Endothelial cell of umbilical vein (primary cell): ENCODE measurements at regions of chr3 and their contacts with region 1.

Region 1: GRCh38 chr3:16884084-16884747 is 539 bp upstream of the PLCL2 start:
- DNase-seq: peak; percentile 55
- H3K4me3 ChIP-seq: peak overlapping the region; percentile 93 to 97 (median 95)
- H3K27ac ChIP-seq: peak overlapping the region; percentile 50
- H3K4me1 ChIP-seq: peaks cover 16% of the 10 kb centered on the region
- H3K27me3 ChIP-seq: no peaks in the 10 kb centered on the region
- CTCF ChIP-seq: peak; percentile 66 to 86
- POLR2A ChIP-seq: no peak

Region 2: GRCh38 chr3:16842272-16843270 is 41.6 kb before region 1 on chr3:
- CTCF ChIA-PET with region 1: interaction called, 20 read pairs
- POLR2A ChIA-PET with region 1: no interaction called
- dilution Hi-C with region 1: no loop called
- intact Hi-C with region 1: loop called (anchors 2 kb)
- DNase-seq: no peak
- H3K4me3 ChIP-seq: no peak overlapping the region
- H3K27ac ChIP-seq: no peak overlapping the region
- H3K4me1 ChIP-seq: peaks cover 23% of the 10 kb centered on the region
- H3K27me3 ChIP-seq: no peaks in the 10 kb centered on the region
- CTCF ChIP-seq: no peak
- POLR2A ChIP-seq: no peak

Region 3: GRCh38 chr3:16864610-16865313 is 19.5 kb before region 1 on chr3:
- CTCF ChIA-PET with region 1: interaction called, 7 read pairs
- POLR2A ChIA-PET with region 1: no interaction called
- dilution Hi-C with region 1: no loop called
- intact Hi-C with region 1: loop called (anchors 1 kb)
- DNase-seq: peak; percentile 88
- H3K4me3 ChIP-seq: peak overlapping the region in 2 of 3 experiments; percentile 6 to 41
- H3K27ac ChIP-seq: peak overlapping the region; percentile 75
- H3K4me1 ChIP-seq: peaks cover 23% of the 10 kb centered on the region
- H3K27me3 ChIP-seq: no peaks in the 10 kb centered on the region
- CTCF ChIP-seq: no peak
- POLR2A ChIP-seq: no peak

Region 4: GRCh38 chr3:16906682-16907081 is 22.5 kb after region 1 on chr3:
- CTCF ChIA-PET with region 1: interaction called, 33 read pairs
- POLR2A ChIA-PET with region 1: no interaction called
- dilution Hi-C with region 1: no loop called
- intact Hi-C with region 1: loop called (anchors 1 kb)
- DNase-seq: peak; percentile 65
- H3K4me3 ChIP-seq: no peak overlapping the region
- H3K27ac ChIP-seq: peak overlapping the region; percentile 78
- H3K4me1 ChIP-seq: peaks cover 34% of the 10 kb centered on the region
- H3K27me3 ChIP-seq: no peaks in the 10 kb centered on the region
- CTCF ChIP-seq: no peak
- POLR2A ChIP-seq: no peak

Region 5: DNA sequence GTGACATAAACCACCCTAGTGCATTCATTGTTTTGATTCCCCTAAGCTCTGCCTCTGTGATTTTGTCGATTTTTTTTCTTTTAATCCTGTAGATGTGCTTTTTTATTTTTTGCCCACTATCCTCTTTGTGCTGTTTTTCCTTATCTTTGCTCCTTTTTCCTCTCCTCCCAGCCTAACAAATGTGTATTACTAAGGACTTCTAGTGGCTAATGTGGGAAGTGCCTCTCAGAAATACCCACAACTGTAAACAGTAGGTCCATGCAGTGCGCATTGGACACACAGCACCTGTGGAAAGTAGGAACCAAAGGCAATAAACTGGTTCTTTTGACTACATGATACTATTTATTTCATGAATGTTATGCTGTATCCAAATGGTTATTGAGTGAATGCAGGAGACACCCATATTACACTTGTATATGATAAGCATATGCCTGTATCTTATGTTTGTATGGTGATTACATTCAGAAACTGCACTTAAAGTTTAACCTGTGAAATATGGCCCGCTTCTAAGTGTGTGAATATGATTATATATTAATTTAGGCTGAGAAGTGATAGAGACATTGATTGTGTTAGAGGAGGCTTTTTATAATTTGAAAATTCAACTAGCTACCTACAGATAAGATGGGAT is 148.3 kb after region 1 on chr3:
- CTCF ChIA-PET with region 1: interaction called, 8 read pairs
- POLR2A ChIA-PET with region 1: no interaction called
- dilution Hi-C with region 1: no loop called
- intact Hi-C with region 1: loop called (anchors 2 kb)
- DNase-seq: peak; percentile 58
- H3K4me3 ChIP-seq: no peak overlapping the region
- H3K27ac ChIP-seq: no peak overlapping the region
- H3K4me1 ChIP-seq: no peaks in the 10 kb centered on the region
- H3K27me3 ChIP-seq: no peaks in the 10 kb centered on the region
- CTCF ChIP-seq: peak; percentile 35 to 55
- POLR2A ChIP-seq: no peak

Region 6: GRCh38 chr3:17077606-17078005 is 193.4 kb after region 1 on chr3:
- CTCF ChIA-PET with region 1: no interaction called
- POLR2A ChIA-PET with region 1: no interaction called
- dilution Hi-C with region 1: no loop called
- intact Hi-C with region 1: no loop called
- DNase-seq: no peak
- H3K4me3 ChIP-seq: no peak overlapping the region
- H3K27ac ChIP-seq: no peak overlapping the region
- H3K4me1 ChIP-seq: no peaks in the 10 kb centered on the region
- H3K27me3 ChIP-seq: no peaks in the 10 kb centered on the region
- CTCF ChIP-seq: no peak
- POLR2A ChIP-seq: no peak

Region 7: GRCh38 chr3:17233398-17233800 is 349.2 kb after region 1 on chr3:
- CTCF ChIA-PET with region 1: interaction called, 7 read pairs
- POLR2A ChIA-PET with region 1: interaction called, 5 read pairs
- dilution Hi-C with region 1: no loop called
- intact Hi-C with region 1: loop called (anchors 1 kb)
- DNase-seq: peak; percentile 74
- H3K4me3 ChIP-seq: no peak overlapping the region
- H3K27ac ChIP-seq: no peak overlapping the region
- H3K4me1 ChIP-seq: peaks cover 10% of the 10 kb centered on the region
- H3K27me3 ChIP-seq: no peaks in the 10 kb centered on the region
- CTCF ChIP-seq: peak; percentile 39 to 48
- POLR2A ChIP-seq: no peak